AG04450 (cell line): ENCODE measurements at regions of chr6 and their contacts with region 1.

Region 1: GRCh38 chr6:161418463-161418945 is 144.6 kb upstream of the AGPAT4 start:
- DNase-seq: peak; percentile 76
- H3K4me3 ChIP-seq: no peak overlapping the region
- H3K27ac ChIP-seq: peak overlapping the region; percentile 87
- H3K27me3 ChIP-seq: no peaks in the 10 kb centered on the region
- CTCF ChIP-seq: peak; percentile 71

Region 2: DNA sequence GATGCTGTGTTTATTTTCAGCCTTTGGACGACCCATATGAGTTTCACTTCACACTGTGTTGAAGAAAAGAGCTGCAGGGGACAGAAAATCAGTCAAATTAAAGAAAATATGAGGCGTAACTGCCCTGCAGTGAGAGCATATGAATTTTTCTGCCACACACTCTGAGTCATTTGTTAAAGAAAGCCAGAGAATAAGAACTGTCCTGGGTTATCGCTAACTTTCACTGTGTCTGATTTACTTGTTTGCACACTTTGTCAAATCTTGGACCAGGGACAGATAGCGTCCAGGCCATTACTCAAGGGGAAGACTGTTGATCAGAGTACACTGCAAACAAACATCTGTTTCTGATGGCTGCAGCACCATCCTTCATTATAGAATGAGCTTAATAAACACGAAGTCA is 17.8 kb before region 1 on chr6:
- CTCF ChIA-PET with region 1: interaction called, 52 read pairs
- POLR2A ChIA-PET with region 1: no interaction called
- DNase-seq: no peak
- H3K4me3 ChIP-seq: no peak overlapping the region
- H3K27ac ChIP-seq: no peak overlapping the region
- H3K27me3 ChIP-seq: no peaks in the 10 kb centered on the region
- CTCF ChIP-seq: no peak

Region 3: GRCh38 chr6:161429921-161430490 is 11.5 kb after region 1 on chr6:
- CTCF ChIA-PET with region 1: interaction called, 28 read pairs
- POLR2A ChIA-PET with region 1: interaction called, 11 read pairs
- DNase-seq: no peak
- H3K4me3 ChIP-seq: no peak overlapping the region
- H3K27ac ChIP-seq: no peak overlapping the region
- H3K27me3 ChIP-seq: no peaks in the 10 kb centered on the region
- CTCF ChIP-seq: no peak

Region 4: DNA sequence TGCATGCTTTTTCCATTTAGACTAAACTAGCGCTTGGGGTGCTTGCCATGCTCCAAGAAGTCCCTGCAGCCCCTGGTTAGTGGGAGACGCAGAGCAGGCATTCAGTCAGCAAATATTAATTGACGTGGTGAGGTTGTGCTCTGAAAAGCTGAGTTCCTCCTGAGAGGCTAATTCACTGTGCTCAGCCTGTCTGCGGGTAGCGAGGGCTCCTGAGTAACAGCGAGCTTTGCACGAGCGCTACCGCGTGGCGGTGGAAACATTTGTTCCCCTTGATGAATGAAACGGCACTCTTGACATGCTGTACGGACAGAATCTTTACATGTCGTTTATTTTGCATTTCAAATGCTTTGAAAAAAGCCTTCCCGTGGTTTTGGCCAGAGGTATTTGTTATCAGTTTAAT is 26.0 kb after region 1 on chr6:
- CTCF ChIA-PET with region 1: interaction called, 68 read pairs
- POLR2A ChIA-PET with region 1: no interaction called
- DNase-seq: no peak
- H3K4me3 ChIP-seq: no peak overlapping the region
- H3K27ac ChIP-seq: no peak overlapping the region
- H3K27me3 ChIP-seq: no peaks in the 10 kb centered on the region
- CTCF ChIP-seq: peak; percentile 37

Region 5: DNA sequence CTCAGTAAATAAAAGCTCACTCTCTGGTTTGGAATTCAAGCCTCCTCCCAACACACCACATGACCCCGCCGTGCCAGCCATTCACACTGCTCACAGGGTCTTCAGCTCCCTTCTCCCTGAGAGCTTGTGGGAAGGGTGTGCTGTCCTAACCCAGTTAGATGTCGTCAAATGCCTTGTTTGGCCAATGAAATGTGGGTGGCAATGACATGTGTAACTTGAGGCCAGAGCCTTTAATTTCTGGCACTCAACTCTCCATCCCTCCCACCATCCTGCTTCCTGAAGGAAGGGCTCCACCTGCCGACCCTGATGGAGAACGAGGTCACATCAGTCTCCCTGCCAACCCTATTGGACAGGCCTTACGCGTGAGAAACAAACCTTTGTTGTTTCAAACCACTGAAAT is 79.9 kb after region 1 on chr6:
- CTCF ChIA-PET with region 1: interaction called, 32 read pairs
- POLR2A ChIA-PET with region 1: no interaction called
- DNase-seq: no peak
- H3K4me3 ChIP-seq: no peak overlapping the region
- H3K27ac ChIP-seq: no peak overlapping the region
- H3K27me3 ChIP-seq: peaks cover under 1% of the 10 kb centered on the region
- CTCF ChIP-seq: peak; percentile 45

Region 6: DNA sequence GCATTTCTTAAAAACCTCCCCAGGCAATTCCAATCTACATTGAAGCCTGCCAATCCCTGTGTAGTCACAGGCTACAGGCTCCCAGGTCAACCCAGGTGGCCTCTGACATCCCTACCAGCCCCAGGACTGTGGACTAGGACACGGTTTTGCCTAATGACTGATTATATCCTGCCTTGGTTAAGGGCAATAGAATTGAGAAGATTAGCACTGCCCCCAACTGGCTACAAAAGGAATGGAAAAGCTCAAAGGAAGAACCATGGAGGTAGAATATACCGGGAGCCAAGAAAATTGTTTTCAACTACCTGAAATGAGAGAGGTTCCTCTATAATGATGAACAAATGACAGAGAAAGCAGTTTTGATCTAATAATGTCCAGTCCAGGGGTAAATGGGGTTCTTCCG is 276.5 kb after region 1 on chr6:
- CTCF ChIA-PET with region 1: interaction called, 16 read pairs
- POLR2A ChIA-PET with region 1: no interaction called
- DNase-seq: no peak
- H3K4me3 ChIP-seq: no peak overlapping the region
- H3K27ac ChIP-seq: no peak overlapping the region
- H3K27me3 ChIP-seq: no peaks in the 10 kb centered on the region
- CTCF ChIP-seq: peak; percentile 60